Activated naive CD4-positive, alpha-beta T cell treated with anti-CD3 and anti-CD28 coated beads for 36 hours (primary cell): ENCODE measurements at regions of chr3 and their contacts with region 1.

Region 1: GRCh38 chr3:187112934-187113793 is 26.1 kb downstream of the RPL39L start:
- DNase-seq: no peak
- H3K4me3 Mint-ChIP-seq: no peak overlapping the region
- H3K27ac Mint-ChIP-seq: no peak overlapping the region
- H3K4me1 Mint-ChIP-seq: peaks cover 7% of the 10 kb centered on the region
- H3K27me3 Mint-ChIP-seq: no peaks in the 10 kb centered on the region

Region 2: DNA sequence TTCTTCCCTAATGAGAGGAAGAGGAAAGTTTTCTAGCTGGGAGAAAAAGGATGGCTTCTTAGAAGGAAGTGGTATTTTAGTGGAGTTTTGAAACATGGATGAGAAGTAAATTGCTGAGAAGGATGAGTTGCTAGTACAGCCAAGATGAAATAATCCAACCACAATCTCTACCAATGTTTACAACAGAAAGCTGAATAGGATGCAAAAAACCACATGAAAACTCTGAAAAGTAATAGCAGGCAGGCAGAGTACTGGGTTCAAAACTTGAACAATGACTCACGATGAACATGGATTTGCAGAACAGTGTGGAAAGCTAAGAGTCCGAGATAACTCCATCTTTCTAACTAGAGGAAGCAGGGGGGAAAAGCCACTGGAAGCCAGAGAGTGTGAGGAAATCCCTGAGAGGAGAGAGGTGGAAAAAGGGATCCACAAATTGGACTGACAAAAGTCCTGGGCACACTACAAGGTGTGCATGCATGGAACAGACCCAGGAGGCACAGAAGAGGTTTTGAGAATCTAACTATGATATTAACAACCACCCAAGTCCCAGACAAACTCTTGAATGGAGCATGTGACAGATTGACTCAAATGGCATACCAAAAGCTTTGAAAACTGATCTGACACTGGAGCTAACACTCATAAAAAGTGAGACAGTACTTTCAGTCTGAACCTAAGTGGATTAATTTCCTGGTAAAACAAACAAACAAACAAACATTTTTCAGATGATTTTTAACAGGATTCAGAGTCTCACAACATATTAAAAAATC is 106.1 kb before region 1 on chr3:
- CTCF ChIA-PET with region 1: no interaction called
- intact Hi-C with region 1: no loop called
- DNase-seq: no peak
- H3K4me3 Mint-ChIP-seq: no peak overlapping the region
- H3K27ac Mint-ChIP-seq: peak overlapping the region; percentile 28
- H3K4me1 Mint-ChIP-seq: peaks cover 65% of the 10 kb centered on the region
- H3K27me3 Mint-ChIP-seq: no peaks in the 10 kb centered on the region

Region 3: DNA sequence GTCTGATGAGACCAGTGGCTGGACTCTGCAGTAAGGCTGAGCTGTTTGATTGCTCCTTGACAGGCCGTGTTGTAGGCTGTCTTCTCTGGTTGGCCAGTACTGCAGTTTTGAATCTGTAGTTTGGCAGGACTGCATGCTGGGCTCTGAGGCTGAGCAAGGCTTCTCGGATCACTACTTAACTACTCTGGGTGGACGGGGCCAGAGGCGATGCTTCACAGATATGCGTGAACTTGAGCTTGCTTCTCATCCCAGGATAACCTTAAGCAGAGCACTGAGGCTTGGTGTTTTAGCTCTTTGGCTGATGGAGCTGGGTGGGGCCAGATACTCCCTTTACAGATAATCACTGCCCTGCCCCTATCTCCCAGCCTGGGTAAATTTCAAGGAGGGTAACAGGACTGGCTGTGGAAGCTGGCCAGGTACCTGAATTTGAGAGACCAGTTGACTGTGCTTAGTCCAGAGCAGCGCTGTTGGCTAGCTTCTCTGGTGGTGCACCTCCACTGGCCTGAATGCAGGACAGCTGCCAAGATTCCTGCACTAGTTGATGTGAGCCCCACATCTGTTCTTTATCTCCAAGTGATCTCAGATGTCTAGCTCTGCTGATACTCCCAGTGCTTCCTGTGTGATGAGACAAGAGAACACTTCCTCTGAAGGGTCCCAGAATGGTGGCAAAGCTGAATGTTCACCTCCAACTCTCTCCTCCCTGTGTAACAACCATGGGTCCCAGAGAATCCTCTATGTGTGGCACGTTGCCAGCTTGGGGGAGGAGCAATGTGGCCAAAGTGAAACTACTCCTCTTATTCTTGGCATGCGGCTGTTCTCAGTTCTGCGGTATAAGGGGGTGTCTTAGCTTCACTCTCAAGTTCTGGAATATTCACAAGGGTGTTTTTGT is 11.7 kb before region 1 on chr3:
- CTCF ChIA-PET with region 1: interaction called, 28 read pairs
- intact Hi-C with region 1: no loop called
- DNase-seq: peak; percentile 67
- H3K4me3 Mint-ChIP-seq: peak overlapping the region; percentile 19
- H3K27ac Mint-ChIP-seq: no peak overlapping the region
- H3K4me1 Mint-ChIP-seq: peaks cover 25% of the 10 kb centered on the region
- H3K27me3 Mint-ChIP-seq: no peaks in the 10 kb centered on the region

Region 4: DNA sequence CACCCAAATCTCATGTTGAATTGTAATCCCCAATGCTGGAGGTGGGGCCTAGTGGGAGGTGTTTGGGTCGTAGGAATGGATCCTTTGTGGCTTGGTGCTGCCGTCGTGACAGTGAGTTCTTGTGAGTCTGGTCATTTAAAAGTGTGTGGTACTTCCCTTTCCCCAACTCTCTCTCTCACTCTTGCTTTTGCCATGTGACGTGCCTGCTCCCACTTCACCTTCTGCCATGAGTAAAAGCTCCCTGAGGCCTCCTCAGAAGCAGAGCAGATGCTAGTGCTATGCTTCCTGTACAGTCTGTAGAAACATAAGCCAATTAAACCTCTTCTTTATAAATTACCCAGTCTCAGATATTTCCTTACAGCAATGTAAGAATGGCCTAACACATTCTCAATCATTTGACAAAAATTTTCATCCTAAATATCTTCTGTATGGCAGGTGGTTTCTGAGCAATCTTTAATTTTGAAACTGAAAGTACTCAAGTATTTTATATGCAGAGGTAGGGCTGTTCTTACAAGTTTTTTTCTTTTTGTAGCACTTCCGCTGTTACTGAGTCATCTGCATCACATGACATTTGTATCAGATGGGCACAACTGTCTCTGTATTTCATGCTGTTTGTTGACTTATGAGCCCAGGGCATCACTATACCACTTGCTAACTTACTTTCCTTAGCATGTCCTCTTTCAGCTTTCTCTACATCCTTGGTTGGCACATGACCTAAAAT is 17.3 kb after region 1 on chr3:
- CTCF ChIA-PET with region 1: interaction called, 18 read pairs
- intact Hi-C with region 1: loop called (anchors 1 kb)
- DNase-seq: peak; percentile 64
- H3K4me3 Mint-ChIP-seq: peak overlapping the region; percentile 42
- H3K27ac Mint-ChIP-seq: peak overlapping the region; percentile 98
- H3K4me1 Mint-ChIP-seq: peaks cover 40% of the 10 kb centered on the region
- H3K27me3 Mint-ChIP-seq: no peaks in the 10 kb centered on the region

Region 5: DNA sequence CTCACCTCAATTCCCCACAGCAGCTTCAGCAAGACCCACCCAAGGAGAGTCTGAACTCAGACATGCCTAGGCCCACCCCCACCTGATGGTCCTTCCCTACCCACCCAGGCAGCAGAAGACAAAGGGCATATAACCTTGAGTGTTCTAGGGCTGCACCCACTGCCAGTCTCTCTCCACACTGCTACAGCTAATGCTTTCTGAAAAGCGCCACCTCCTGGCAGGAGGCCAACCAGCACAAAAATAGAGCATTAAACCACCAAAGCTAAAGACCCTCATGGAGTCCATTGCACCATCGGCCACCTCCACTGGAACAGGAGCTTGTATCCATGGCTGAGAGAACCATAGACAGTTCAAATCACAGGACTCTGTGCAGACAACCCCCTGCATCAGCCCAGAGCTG is 37.4 kb after region 1 on chr3:
- CTCF ChIA-PET with region 1: interaction called, 105 read pairs
- intact Hi-C with region 1: loop called (anchors 1 kb)
- DNase-seq: peak; percentile 81
- H3K4me3 Mint-ChIP-seq: no peak overlapping the region
- H3K27ac Mint-ChIP-seq: no peak overlapping the region
- H3K4me1 Mint-ChIP-seq: no peaks in the 10 kb centered on the region
- H3K27me3 Mint-ChIP-seq: no peaks in the 10 kb centered on the region

Region 6: DNA sequence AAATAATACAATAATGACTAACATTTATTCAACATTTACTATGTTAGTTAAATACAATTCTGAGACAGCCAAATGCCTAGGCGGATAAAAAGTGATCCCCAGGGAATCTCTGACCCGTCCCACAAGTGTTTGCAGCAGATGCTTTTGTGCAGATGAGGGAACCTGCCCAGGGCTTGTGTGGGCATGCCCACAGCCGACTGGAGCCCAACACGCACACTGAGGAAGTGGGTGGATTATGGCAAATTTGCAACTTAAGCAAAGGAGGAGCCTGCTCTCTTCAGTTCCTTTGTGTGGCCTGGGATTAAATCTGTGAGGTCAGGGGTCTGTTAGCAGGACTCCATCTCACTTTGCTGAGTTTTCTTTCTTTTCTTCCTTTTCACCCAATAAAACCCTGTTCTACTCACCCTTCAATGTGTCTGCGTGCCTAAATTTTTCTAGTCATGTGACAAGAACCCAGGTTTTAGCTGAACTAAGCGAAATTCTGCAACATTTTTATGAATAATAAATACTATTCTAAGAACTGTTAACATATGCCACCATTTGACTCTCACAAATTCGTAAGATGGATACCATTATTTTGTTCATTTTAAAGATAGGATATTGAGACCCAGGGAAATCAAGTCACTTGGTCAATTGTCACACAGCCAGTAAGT is 70.2 kb after region 1 on chr3:
- CTCF ChIA-PET with region 1: no interaction called
- intact Hi-C with region 1: no loop called
- DNase-seq: peak; percentile 23
- H3K4me3 Mint-ChIP-seq: no peak overlapping the region
- H3K27ac Mint-ChIP-seq: peak overlapping the region; percentile 20
- H3K4me1 Mint-ChIP-seq: no peaks in the 10 kb centered on the region
- H3K27me3 Mint-ChIP-seq: peaks cover 2% of the 10 kb centered on the region

Region 7: DNA sequence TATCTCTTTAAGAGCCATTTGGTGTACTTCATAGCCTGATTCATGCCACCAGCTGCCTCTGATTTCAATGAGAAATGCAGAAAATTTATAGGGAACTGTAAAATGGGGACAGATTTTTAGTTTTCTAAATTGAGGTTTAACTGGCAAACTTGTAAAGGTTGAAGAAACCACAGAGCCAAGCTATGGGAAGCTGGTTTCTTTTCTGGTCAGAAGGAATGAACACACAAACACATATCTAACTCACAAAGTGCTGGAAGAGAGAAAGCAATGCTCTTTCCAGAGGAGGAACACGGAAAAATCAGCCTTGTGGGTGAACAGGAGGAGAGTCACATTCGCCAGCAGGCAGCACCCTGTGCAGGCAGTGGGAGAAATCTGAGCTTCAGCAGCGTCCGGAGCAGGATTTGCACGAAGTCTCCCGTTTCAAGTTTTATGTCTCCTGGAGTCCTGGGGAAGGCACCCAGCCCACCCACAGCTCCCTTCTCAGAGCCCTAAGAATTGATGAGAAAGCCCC is 177.9 kb after region 1 on chr3:
- CTCF ChIA-PET with region 1: no interaction called
- intact Hi-C with region 1: loop called (anchors 10 kb)
- DNase-seq: no peak
- H3K4me3 Mint-ChIP-seq: no peak overlapping the region
- H3K27ac Mint-ChIP-seq: no peak overlapping the region
- H3K4me1 Mint-ChIP-seq: peaks cover 2% of the 10 kb centered on the region
- H3K27me3 Mint-ChIP-seq: peaks cover 22% of the 10 kb centered on the region

Region 8: GRCh38 chr3:187325632-187326031 is 212.5 kb after region 1 on chr3:
- CTCF ChIA-PET with region 1: no interaction called
- intact Hi-C with region 1: no loop called
- DNase-seq: no peak
- H3K4me3 Mint-ChIP-seq: no peak overlapping the region
- H3K27ac Mint-ChIP-seq: no peak overlapping the region
- H3K4me1 Mint-ChIP-seq: no peaks in the 10 kb centered on the region
- H3K27me3 Mint-ChIP-seq: no peaks in the 10 kb centered on the region

Region 9: DNA sequence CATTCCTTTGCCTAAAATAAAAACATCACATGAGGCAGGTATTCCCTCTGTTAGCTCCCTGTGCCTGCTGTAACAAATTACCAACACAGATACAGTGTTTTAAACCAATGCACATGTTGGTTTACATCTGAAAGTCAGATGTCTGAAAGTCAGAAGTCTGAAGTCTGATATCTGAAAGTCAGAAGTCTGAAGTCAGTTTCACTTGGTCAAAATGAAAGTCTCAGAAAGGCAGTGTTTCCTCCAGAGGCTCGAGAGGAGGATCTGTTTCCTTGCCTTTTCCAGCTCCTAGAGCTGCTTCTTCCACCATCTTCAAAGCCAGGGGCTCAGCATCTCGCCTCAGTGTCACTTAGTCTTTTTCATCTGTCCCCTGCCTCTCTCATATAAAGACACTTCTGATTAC is 535.0 kb after region 1 on chr3:
- CTCF ChIA-PET with region 1: no interaction called
- intact Hi-C with region 1: no loop called
- DNase-seq: no peak
- H3K4me3 Mint-ChIP-seq: no peak overlapping the region
- H3K27ac Mint-ChIP-seq: no peak overlapping the region
- H3K4me1 Mint-ChIP-seq: no peaks in the 10 kb centered on the region
- H3K27me3 Mint-ChIP-seq: peaks cover 26% of the 10 kb centered on the region

Region 10: GRCh38 chr3:187714404-187714979 is 601.3 kb after region 1 on chr3:
- CTCF ChIA-PET with region 1: no interaction called
- intact Hi-C with region 1: loop called (anchors 10 kb)
- DNase-seq: peak; percentile 88
- H3K4me3 Mint-ChIP-seq: no peak overlapping the region
- H3K27ac Mint-ChIP-seq: no peak overlapping the region
- H3K4me1 Mint-ChIP-seq: peaks cover 9% of the 10 kb centered on the region
- H3K27me3 Mint-ChIP-seq: no peaks in the 10 kb centered on the region